ENCODE measurements at regions of chr1 and their contacts with region 1.

Region 1: GRCh38 chr1:8431019-8431418 is 113.1 kb downstream of the SLC45A1 start:
- DNase-seq: peak in 7 of 9 donors; percentile 25 to 60 (median 47)
- ATAC-seq: peak; percentile 72
- H3K4me3 ChIP-seq: no peak overlapping the region
- H3K4me3 Mint-ChIP-seq: peak overlapping the region; percentile 52 to 74 (median 62)
- H3K27ac ChIP-seq: peak overlapping the region; percentile 52
- H3K27ac Mint-ChIP-seq: peak overlapping the region; percentile 44 to 94 (median 88)
- H3K4me1 ChIP-seq: peaks cover 38 to 45% of the 10 kb centered on the region in 2 donors
- H3K4me1 Mint-ChIP-seq: peaks cover 61 to 89% (median 69%) of the 10 kb centered on the region in 7 donors
- H3K27me3 ChIP-seq: no peaks in the 10 kb centered on the region
- H3K27me3 Mint-ChIP-seq: no peaks in the 10 kb centered on the region

Region 2: DNA sequence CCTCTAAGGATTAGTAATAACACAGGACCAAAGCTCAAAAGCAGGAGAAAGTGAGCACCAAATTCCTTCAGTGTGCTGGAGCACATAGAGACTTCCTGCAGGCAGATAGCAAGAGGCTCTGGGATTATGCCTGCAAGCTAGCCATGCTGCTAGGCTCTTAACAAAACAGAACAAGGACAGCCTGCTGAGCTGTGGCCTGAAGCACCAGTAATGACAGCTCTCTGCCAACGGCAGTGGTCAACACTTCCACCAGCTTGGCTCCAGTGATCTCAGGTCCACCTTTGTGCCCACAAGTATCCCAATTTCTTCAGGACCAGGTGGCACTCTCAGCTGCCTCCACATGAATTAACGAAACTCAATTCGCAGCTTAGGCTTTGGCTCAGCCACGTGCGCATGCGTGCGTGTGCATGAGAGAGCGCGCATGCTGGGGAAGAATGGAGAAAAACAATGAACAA is 48.9 kb before region 1 on chr1:
- CTCF ChIA-PET with region 1: interaction called, 3 read pairs
- POLR2A ChIA-PET with region 1: interaction called, 3 read pairs
- intact Hi-C with region 1: loop called in 1 of 2 experiments (anchors 5 kb)
- DNase-seq: no peak
- ATAC-seq: no peak
- H3K4me3 ChIP-seq: no peak overlapping the region
- H3K4me3 Mint-ChIP-seq: peak overlapping the region; percentile 19 to 87 (median 78)
- H3K27ac ChIP-seq: peak overlapping the region; percentile 52
- H3K27ac Mint-ChIP-seq: peak overlapping the region in 7 of 9 donors; percentile 23 to 98 (median 90)
- H3K4me1 ChIP-seq: peaks cover 30 to 61% of the 10 kb centered on the region in 2 donors
- H3K4me1 Mint-ChIP-seq: peaks cover 51 to 96% (median 91%) of the 10 kb centered on the region in 7 donors
- H3K27me3 ChIP-seq: no peaks in the 10 kb centered on the region
- H3K27me3 Mint-ChIP-seq: no peaks in the 10 kb centered on the region

Region 3: GRCh38 chr1:8396786-8397406 is 34.1 kb before region 1 on chr1:
- CTCF ChIA-PET with region 1: no interaction called
- POLR2A ChIA-PET with region 1: interaction called, 5 read pairs
- intact Hi-C with region 1: loop called in 1 of 2 experiments (anchors 5 kb)
- DNase-seq: no peak
- ATAC-seq: peak; percentile 71
- H3K4me3 ChIP-seq: no peak overlapping the region
- H3K4me3 Mint-ChIP-seq: peak overlapping the region in 9 of 10 donors; percentile 6 to 94 (median 45)
- H3K27ac ChIP-seq: peak overlapping the region; percentile 10
- H3K27ac Mint-ChIP-seq: peak overlapping the region; percentile 36 to 95 (median 85)
- H3K4me1 ChIP-seq: peaks cover 38 to 42% of the 10 kb centered on the region in 2 donors
- H3K4me1 Mint-ChIP-seq: peaks cover 48 to 78% (median 73%) of the 10 kb centered on the region in 7 donors
- H3K27me3 ChIP-seq: no peaks in the 10 kb centered on the region
- H3K27me3 Mint-ChIP-seq: no peaks in the 10 kb centered on the region